OCI-LY7 (cell line): ENCODE measurements at regions of chr12 and their contacts with region 1.

Region 1: GRCh38 chr12:21248679-21249078 is 86.0 kb downstream of the SLCO1A2 start:
- DNase-seq: peak; percentile 6
- H3K4me3 ChIP-seq: no peak overlapping the region
- H3K27ac ChIP-seq: no peak overlapping the region
- H3K4me1 ChIP-seq: no peaks in the 10 kb centered on the region
- CTCF ChIP-seq: peak; percentile 66

Region 2: DNA sequence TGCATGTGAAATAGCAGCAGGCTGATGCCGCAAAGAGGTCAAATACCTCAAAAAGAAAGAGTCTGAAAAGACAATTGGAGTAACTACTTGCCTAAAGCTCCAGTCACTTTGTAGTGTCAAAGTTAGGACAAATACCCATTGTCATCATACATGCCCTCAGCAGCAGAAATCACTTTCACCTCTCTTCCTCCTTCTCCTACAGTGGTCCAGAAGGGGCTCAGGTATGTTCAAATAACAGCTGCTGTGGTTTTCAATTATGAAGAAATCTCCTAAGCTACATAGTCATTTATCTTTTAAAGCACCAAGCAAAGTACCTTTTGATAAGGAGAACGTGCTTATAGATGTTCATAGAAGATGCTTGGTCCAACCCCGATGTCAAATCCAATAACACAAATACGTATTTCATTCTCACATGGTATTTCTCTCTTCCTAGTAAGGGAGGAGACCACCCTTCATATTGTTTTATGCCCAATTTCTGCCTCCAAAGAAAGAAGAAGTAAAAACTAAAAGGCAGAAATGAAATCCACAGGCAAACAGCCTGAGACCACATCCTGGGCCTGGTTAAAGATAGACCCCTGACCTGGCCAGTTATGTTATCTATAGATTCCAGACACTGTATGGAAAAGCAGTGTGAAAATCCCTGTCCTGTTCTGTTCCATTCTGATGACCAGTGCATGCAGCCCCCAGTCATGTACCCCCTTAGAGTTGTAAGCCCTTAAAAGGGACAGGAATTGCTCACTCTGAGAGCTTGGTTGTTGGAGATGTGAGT is 332.3 kb after region 1 on chr12:
- CTCF ChIA-PET with region 1: no interaction called
- POLR2A ChIA-PET with region 1: no interaction called
- intact Hi-C with region 1: no loop called
- DNase-seq: no peak
- H3K4me3 ChIP-seq: no peak overlapping the region
- H3K27ac ChIP-seq: no peak overlapping the region
- H3K4me1 ChIP-seq: no peaks in the 10 kb centered on the region
- CTCF ChIP-seq: no peak

Region 3: GRCh38 chr12:21683115-21683514 is 434.4 kb after region 1 on chr12:
- CTCF ChIA-PET with region 1: no interaction called
- POLR2A ChIA-PET with region 1: no interaction called
- intact Hi-C with region 1: loop called (anchors 10 kb)
- DNase-seq: no peak
- H3K4me3 ChIP-seq: no peak overlapping the region
- H3K27ac ChIP-seq: no peak overlapping the region
- H3K4me1 ChIP-seq: no peaks in the 10 kb centered on the region
- CTCF ChIP-seq: no peak